ENCODE measurements at regions of chr16 and their contacts with region 1.

Region 1: DNA sequence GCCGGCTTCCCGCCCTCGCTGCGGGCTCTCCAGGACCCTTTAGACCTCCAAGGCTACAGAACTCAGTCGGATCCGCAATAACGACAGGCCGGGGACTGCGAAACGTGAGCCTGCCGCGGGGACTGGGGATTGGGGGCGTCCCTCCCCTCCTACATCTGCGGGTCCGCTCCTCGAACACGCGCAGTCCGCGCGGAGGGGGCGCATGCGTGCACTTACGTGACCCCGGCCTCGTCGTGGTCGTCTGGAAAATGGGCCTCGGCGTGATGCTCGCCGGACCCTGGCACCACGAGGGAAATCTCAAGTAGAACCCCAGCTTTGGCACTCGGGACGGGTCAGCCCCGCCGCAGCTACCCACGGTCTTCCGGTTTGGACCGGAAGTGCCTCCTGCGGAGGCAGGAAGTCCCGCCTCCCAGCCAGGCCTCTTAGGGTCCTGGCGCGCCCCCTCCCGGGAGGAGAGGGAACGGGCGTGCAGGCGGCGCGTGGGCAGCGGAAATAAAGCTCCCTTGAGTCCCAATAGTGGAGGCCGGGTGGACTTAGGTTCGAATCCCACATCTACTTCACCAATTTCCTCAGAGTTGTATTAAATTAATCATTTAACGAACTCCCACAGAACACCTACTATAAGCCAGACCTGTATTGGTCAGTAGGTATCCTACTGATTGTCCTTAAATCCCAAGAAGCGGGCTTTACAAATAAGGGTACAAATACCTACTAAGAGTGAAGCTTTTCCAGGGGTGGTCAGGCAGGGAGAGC is at the start of gene TAF1C:
- DNase-seq: peak; percentile 94 to 97
- ATAC-seq: peak; percentile 96
- H3K4me3 ChIP-seq: peak within 1 kb of the TSS; percentile 77 to 88
- H3K27ac ChIP-seq: peak within 1 kb of the TSS in 1 of 2 donors; percentile 41
- H3K4me1 ChIP-seq: no peaks in the 10 kb centered on the region
- H3K27me3 ChIP-seq: no peaks in the 10 kb centered on the region
- total RNA-seq, gene TAF1C: 46.6 to 50.9 TPM

Region 2: DNA sequence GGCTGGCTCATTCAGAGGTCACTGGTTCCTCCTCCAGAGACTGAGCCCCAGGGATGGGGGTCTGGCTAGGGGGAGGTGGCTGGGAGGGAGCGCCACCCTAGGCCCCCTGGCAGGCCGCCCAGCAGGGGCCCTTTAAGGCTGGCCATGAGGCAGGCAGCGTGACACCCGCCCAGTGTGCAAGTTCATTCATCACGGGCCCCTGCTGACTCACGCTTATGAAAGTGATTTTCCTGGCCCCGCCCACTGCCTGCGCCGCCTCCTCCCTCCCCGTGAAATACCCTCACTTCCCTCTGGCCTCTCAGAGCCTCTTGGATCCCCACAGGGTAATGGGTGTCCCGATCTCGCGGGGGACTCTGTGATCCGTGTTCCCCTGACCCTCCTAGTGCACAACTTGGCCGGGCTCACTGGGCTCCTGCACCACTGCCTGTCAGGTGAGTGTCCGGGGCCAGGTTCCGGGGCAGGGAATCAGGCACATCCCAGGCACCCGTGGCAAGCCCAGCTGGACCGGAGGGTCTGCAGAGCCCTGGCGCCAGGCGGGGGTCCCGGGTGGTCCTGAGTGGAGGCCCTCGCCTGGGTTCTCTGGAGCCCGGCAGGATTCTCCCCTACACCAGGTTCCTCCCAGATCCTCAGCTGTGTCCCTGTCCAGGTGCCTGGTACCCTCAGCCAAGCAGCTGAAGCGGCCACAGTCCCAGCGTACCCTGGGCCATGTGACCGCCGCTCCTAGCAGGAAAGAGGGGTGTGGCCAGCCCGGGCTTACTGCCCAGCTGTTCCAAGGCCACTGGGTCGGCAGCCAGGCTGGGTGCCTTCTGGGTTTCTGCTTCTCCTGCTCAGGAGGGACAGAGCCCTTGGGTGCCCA is 233.7 kb before region 1 on chr16 and contains the start of gene OSGIN1:
- intact Hi-C with region 1: loop called in 1 of 2 experiments (anchors 5 kb)
- DNase-seq: peak; percentile 98
- ATAC-seq: peak; percentile 94
- H3K4me3 ChIP-seq: peak within 1 kb of the TSS; percentile 41 to 55
- H3K27ac ChIP-seq: peak within 1 kb of the TSS in 1 of 2 donors; percentile 93
- H3K4me1 ChIP-seq: no peaks in the 10 kb centered on the region
- H3K27me3 ChIP-seq: no peaks in the 10 kb centered on the region
- total RNA-seq, gene OSGIN1: 10.3 to 13.6 TPM

Region 3: DNA sequence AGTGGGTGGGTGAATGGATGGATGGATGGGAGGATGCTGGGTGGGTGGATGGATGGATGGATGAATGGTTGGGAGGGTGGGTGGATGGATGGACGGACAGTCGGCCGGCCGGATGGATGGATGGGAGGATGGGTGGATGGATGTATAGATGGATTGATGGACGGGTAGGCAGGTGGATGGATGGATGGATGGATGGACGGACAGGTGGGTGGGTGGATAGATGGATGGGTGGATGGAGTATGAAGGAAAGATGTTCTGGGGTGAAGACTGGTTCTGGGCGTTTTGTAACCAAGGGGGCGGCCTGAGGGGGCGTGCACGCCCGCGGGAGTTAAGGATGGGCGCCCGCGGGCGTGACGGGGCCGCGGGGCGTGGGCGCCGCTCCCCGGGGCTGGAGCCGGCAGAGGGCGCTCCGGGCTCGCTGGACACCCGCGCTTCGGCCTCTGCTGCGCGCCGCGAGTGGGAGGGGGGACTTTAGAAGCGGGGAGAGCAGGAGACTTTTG is 219.0 kb before region 1 on chr16 and contains the start of gene NECAB2:
- intact Hi-C with region 1: loop called (anchors 5 to 10 kb)
- DNase-seq: peak in 1 of 2 donors; percentile 60
- ATAC-seq: peak; percentile 36
- H3K4me3 ChIP-seq: peak within 1 kb of the TSS; percentile 39 to 55
- H3K27ac ChIP-seq: no peak within 1 kb of the TSS
- H3K4me1 ChIP-seq: no peaks in the 10 kb centered on the region
- H3K27me3 ChIP-seq: no peaks in the 10 kb centered on the region
- total RNA-seq, gene NECAB2: 0.23 to 0.75 TPM

Region 4: GRCh38 chr16:84084570-84085270 is 102.1 kb before region 1 on chr16:
- intact Hi-C with region 1: loop called in 1 of 2 experiments (anchors 2 kb)
- DNase-seq: peak in 1 of 2 donors; percentile 61
- ATAC-seq: no peak
- H3K4me3 ChIP-seq: no peak overlapping the region
- H3K27ac ChIP-seq: peak overlapping the region in 1 of 2 donors; percentile 11
- H3K4me1 ChIP-seq: no peaks in the 10 kb centered on the region
- H3K27me3 ChIP-seq: no peaks in the 10 kb centered on the region

Region 5: DNA sequence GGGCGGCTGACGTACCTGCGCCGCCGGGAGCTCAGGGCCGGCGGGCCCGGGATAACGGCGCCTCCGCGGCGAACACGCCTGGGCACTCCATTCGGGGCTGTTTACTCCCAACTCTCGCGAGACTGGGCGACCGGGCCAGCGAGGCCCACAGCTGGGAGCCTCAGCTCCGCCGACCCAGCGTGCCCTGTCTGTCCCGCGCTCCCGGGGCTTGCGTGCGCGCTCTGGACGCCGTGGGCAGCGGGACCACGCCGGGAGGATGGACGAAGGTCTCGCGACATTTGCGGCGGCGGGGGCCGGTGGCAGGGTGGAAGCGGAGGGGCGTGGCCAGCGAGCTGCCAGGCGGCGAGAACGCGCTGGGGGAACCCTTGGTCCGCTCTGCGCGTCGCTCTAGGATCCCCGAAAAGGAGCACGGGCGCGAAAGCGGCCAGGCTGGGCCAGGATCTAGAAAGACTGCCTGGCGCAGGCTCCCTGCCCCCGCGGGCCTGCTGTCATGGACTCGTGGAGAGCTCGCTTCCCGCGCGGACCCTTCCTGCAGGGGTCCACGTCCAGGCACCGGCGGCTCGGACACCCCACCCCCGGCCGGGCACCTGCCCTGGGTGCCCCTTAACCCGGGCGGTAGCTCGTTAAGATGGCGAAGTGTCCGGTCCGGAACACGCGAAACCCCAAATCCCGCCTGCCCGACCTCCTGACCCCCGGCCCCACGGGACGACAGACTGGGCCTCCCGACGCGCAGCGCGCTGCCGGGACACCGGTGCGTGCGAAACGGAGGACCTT is 70.0 kb before region 1 on chr16 and contains the start of gene MBTPS1:
- intact Hi-C with region 1: loop called in 1 of 2 experiments (anchors 1 kb)
- DNase-seq: peak; percentile 99 to 100
- ATAC-seq: peak; percentile 100
- H3K4me3 ChIP-seq: peak within 1 kb of the TSS; percentile 93 to 99
- H3K27ac ChIP-seq: peak within 1 kb of the TSS; percentile 36 to 64
- H3K4me1 ChIP-seq: no peaks in the 10 kb centered on the region
- H3K27me3 ChIP-seq: no peaks in the 10 kb centered on the region
- total RNA-seq, gene MBTPS1: 75.0 to 108 TPM

Region 6: DNA sequence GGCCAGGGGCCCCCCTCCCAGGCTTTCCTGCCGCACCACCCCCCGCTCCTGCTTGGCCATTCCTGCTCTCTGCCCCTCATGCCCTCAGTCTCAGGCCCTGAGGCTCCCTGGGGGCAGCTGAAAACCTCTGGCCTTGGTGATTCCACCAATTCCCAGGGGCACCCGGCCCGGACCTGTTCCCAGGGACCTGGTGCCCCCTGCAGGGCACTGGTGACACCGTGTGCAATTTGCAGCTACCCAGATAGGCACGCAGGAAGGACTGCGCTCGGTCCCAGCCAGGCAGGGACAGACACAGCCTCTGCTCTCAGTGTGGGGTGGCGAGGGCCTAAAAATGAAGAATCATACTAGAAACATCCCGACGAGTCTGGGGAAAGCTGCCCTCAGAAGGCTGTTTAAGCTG is 121.3 kb after region 1 on chr16:
- intact Hi-C with region 1: no loop called
- DNase-seq: peak; percentile 58 to 88
- ATAC-seq: peak; percentile 28
- H3K4me3 ChIP-seq: no peak overlapping the region
- H3K27ac ChIP-seq: no peak overlapping the region
- H3K4me1 ChIP-seq: no peaks in the 10 kb centered on the region
- H3K27me3 ChIP-seq: no peaks in the 10 kb centered on the region